Activated naive CD4-positive, alpha-beta T cell treated with anti-CD3 and anti-CD28 coated beads for 36 hours (primary cell): ENCODE measurements at regions of chr1 and their contacts with region 1.

Region 1: GRCh38 chr1:16366722-16367257 is at the start of gene SZRD1:
- DNase-seq: peak; percentile 97
- H3K4me3 Mint-ChIP-seq: peak within 1 kb of the TSS; percentile 93
- H3K27ac Mint-ChIP-seq: peak within 1 kb of the TSS; percentile 98
- H3K4me1 Mint-ChIP-seq: peaks cover 35% of the 10 kb centered on the region
- H3K27me3 Mint-ChIP-seq: no peaks in the 10 kb centered on the region
- total RNA-seq, gene SZRD1: 169 to 179 TPM

Region 2: DNA sequence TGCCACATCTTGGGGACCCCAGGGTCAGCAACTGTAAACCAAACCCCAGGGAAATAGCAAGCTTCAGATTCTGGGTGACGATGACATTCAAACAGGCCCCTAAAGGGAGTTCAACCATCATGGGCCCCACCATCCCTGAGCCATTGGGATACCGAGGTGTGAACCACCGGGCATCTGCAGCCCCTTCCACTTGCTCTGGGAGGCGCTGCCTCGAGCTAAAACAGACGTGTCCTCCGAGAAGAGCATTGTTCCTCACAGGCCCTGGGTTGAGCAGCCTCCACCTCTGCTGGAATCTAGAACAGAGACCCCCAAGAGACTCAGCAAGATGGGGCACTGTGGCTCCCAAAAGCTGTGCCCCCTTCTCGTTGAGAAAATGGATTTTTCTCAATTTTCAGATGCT is 976.1 kb before region 1 on chr1:
- CTCF ChIA-PET with region 1: no interaction called
- intact Hi-C with region 1: no loop called
- DNase-seq: no peak
- H3K4me3 Mint-ChIP-seq: no peak overlapping the region
- H3K27ac Mint-ChIP-seq: no peak overlapping the region
- H3K4me1 Mint-ChIP-seq: peaks cover 4% of the 10 kb centered on the region
- H3K27me3 Mint-ChIP-seq: peaks cover 13% of the 10 kb centered on the region

Region 3: DNA sequence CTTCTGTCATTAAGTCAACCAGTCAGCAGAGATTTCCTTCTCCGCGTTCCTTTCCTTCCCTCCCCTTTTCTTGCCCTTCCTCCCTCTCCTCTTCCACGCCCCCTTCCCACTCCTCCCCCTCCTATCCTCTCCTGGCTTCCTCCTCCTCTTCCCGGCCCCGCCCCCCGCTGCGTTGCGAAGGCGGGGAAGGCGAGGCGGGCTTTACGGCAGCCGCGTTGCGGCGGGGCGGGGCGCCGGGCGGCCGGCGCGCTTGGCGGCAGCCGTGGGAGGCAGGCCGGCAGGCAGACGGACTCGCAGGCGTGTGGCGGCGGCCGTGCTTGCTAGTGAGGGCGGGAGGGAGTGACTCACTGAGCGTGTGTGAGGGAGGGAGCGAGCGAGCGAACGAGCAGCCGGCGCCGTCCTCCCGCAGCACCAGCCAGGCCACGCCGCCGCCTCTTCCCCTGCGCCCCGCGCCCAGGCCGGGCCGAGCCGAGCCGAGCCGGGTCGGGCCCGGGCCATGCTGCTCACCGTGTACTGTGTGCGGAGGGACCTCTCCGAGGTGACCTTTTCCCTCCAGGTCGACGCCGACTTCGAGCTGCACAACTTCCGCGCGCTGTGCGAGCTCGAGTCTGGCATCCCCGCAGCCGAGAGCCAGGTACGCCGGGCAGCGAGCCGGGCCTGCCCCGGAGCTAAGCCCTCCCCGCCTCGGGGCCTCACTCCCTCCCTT is 749.5 kb before region 1 on chr1 and contains the start of gene DDI2:
- CTCF ChIA-PET with region 1: no interaction called
- intact Hi-C with region 1: loop called (anchors 2 kb)
- DNase-seq: peak; percentile 96
- H3K4me3 Mint-ChIP-seq: peak within 1 kb of the TSS; percentile 90
- H3K27ac Mint-ChIP-seq: peak within 1 kb of the TSS; percentile 93
- H3K4me1 Mint-ChIP-seq: peaks cover 42% of the 10 kb centered on the region
- H3K27me3 Mint-ChIP-seq: no peaks in the 10 kb centered on the region
- total RNA-seq, gene DDI2: 19.6 to 20.7 TPM

Region 4: DNA sequence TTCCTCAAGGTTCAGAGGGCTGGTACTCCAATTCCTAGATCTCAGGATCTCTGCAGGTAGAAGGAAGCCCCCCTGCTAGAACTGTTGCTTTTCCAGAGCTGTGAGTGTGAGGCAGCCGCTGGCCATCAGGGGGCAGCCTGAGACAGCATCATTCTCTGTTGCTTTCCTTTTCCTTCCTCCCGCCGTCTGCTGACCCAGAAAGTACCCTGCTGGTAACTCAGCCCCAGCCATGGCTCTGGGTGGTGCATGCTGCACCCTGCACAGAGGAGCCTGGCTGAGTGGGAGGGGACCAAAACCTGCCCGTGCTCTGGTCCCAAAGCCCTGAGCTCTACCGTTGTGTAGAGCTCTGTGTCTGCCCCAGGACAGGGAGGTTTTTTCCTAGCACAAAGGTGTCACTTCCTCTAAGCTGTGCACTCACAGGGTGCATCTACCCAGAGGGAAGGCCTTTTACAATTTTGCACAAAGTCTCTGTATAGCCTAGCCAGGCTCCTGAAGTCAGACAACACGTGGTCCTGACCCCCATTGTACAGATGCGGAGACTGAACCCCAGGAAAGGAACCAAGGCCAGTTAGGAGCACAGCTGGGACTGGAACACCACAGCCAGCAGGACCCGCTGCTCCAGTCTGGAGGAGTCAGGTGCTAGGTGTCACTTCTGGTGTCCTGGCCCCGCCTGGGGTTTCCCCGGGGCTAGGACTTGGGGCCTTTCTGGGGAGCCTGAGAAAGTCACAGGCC is 287.7 kb before region 1 on chr1:
- CTCF ChIA-PET with region 1: interaction called, 12 read pairs
- intact Hi-C with region 1: loop called (anchors 1 kb)
- DNase-seq: peak; percentile 85
- H3K4me3 Mint-ChIP-seq: peak overlapping the region; percentile 67
- H3K27ac Mint-ChIP-seq: peak overlapping the region; percentile 65
- H3K4me1 Mint-ChIP-seq: peaks cover 4% of the 10 kb centered on the region
- H3K27me3 Mint-ChIP-seq: peaks cover 4% of the 10 kb centered on the region

Region 5: GRCh38 chr1:16217061-16217785 is 149.6 kb before region 1 on chr1:
- CTCF ChIA-PET with region 1: no interaction called
- intact Hi-C with region 1: loop called (anchors 1 kb)
- DNase-seq: peak; percentile 98
- H3K4me3 Mint-ChIP-seq: peak overlapping the region; percentile 82
- H3K27ac Mint-ChIP-seq: no peak overlapping the region
- H3K4me1 Mint-ChIP-seq: peaks cover 17% of the 10 kb centered on the region
- H3K27me3 Mint-ChIP-seq: no peaks in the 10 kb centered on the region

Region 6: GRCh38 chr1:16300436-16300835 is 66.4 kb before region 1 on chr1:
- CTCF ChIA-PET with region 1: no interaction called
- intact Hi-C with region 1: no loop called
- DNase-seq: no peak
- H3K4me3 Mint-ChIP-seq: no peak overlapping the region
- H3K27ac Mint-ChIP-seq: no peak overlapping the region
- H3K4me1 Mint-ChIP-seq: no peaks in the 10 kb centered on the region
- H3K27me3 Mint-ChIP-seq: no peaks in the 10 kb centered on the region

Region 7: GRCh38 chr1:16351994-16352841 is 14.6 kb before region 1 on chr1 and contains the start of gene FBXO42:
- CTCF ChIA-PET with region 1: interaction called, 49 read pairs
- intact Hi-C with region 1: loop called (anchors 1 kb)
- DNase-seq: peak; percentile 90
- H3K4me3 Mint-ChIP-seq: peak within 1 kb of the TSS; percentile 78
- H3K27ac Mint-ChIP-seq: peak within 1 kb of the TSS; percentile 84
- H3K4me1 Mint-ChIP-seq: peaks cover 32% of the 10 kb centered on the region
- H3K27me3 Mint-ChIP-seq: no peaks in the 10 kb centered on the region
- total RNA-seq, gene FBXO42: 7.5 to 10.2 TPM

Region 8: DNA sequence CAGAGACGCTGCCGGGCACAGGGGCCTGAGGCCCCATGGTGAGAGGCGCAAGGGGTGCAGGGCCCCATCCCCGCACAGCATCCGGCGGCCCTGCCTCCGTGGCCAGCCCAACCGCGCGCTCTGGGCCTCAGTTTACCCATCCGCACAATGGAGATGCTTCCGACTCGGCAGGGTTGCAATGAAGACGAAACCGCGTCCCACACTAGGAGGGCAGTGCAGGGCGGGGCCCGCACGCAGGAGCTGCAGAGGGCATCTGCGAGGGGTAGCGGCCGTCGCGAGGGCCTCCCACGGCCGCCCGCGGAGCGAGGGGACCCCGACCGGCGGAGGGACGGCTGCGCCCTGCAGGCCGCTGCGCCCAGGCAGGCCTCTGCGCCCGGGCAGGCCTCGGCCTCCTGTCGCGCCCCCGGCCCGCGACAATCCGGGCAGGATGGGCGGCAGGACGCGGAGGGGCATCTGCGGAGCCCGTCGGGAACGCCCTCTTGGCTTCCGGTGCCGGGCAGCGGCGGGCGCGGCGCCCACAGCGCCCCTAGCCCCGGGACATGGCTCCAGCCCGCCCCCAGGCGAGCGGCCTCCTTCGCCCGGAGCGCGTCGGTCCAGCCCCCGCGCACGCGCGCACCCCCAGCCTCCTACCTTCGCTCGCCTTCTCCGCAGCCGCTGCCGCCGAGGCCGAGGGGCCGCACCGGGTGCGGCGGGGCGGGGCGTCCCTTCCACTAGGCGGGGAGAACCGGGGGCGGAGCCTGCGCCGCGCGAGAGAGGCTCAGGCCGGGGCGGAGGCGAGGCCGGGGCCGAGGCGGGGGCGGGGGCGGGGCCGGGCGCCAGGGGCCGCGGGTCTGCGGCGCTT is 132.0 kb after region 1 on chr1:
- CTCF ChIA-PET with region 1: no interaction called
- intact Hi-C with region 1: loop called (anchors 1 kb)
- DNase-seq: peak; percentile 88
- H3K4me3 Mint-ChIP-seq: peak overlapping the region; percentile 77
- H3K27ac Mint-ChIP-seq: no peak overlapping the region
- H3K4me1 Mint-ChIP-seq: peaks cover 13% of the 10 kb centered on the region
- H3K27me3 Mint-ChIP-seq: no peaks in the 10 kb centered on the region